ENCODE measurements at regions of chr14 and their contacts with region 1.

Region 1: GRCh38 chr14:33839193-33840076 is 111.4 kb downstream of the EGLN3 start:
- DNase-seq: peak; percentile 51
- H3K4me3 Mint-ChIP-seq: no peak overlapping the region
- H3K27ac Mint-ChIP-seq: no peak overlapping the region
- H3K4me1 Mint-ChIP-seq: peaks cover 1% of the 10 kb centered on the region
- H3K27me3 Mint-ChIP-seq: no peaks in the 10 kb centered on the region

Region 2: DNA sequence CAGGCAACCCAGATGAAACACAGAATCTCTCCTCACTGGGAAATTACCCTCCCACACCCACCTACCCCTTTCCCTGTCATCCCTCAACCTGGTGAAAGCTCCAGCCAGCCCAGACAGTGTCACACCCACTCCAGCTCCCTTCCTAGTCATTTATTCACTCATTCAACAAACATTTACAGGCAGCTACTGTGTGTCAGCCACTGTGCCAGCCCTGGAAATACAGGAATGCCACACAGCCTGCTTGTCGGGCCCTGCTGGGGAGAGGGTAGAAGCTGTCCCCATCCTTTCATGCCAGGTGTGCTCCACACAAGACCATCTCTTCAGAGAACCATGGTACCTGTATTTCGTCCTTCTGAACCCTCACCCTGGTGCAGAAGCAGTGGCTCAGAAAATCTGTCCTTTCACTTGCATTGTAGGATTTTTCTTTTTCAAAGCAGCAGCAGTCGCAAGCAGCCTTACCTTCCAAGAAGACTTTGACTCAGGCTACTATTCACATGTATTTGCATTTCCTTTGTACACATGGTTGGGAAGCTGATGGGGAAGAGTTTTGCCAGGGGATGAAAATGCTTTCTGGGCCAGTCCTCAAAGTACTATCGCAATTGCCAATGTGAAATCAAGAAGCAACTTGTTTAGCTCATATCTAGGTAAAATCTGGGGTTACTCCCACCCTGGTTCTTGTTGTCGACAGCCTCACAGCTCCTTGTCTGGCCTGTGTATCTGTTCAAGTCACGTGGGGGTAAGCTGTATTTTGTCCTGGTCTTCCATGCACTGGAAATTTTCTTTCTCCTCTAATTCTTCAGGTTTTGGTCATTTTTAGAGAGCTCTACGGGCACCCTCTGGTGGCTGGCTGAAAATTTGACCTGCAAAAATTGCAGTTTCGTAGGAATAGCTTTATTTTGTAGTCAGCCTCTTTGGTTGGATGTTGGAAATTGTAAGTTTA is 258.9 kb after region 1 on chr14:
- CTCF ChIA-PET with region 1: interaction called, 44 read pairs
- POLR2A ChIA-PET with region 1: no interaction called
- intact Hi-C with region 1: loop called (anchors 2 kb)
- DNase-seq: peak; percentile 26
- H3K4me3 Mint-ChIP-seq: no peak overlapping the region
- H3K27ac Mint-ChIP-seq: no peak overlapping the region
- H3K4me1 Mint-ChIP-seq: peaks cover 1% of the 10 kb centered on the region
- H3K27me3 Mint-ChIP-seq: no peaks in the 10 kb centered on the region

Region 3: GRCh38 chr14:34227834-34228649 is 388.6 kb after region 1 on chr14:
- CTCF ChIA-PET with region 1: interaction called, 27 read pairs
- POLR2A ChIA-PET with region 1: no interaction called
- intact Hi-C with region 1: loop called (anchors 1 kb)
- DNase-seq: peak; percentile 70
- H3K4me3 Mint-ChIP-seq: no peak overlapping the region
- H3K27ac Mint-ChIP-seq: no peak overlapping the region
- H3K4me1 Mint-ChIP-seq: peaks cover 6% of the 10 kb centered on the region
- H3K27me3 Mint-ChIP-seq: peaks cover 6% of the 10 kb centered on the region

Region 4: GRCh38 chr14:34300882-34301734 is 461.7 kb after region 1 on chr14:
- CTCF ChIA-PET with region 1: interaction called, 24 read pairs
- POLR2A ChIA-PET with region 1: no interaction called
- intact Hi-C with region 1: loop called (anchors 2 kb)
- DNase-seq: no peak
- H3K4me3 Mint-ChIP-seq: no peak overlapping the region
- H3K27ac Mint-ChIP-seq: no peak overlapping the region
- H3K4me1 Mint-ChIP-seq: no peaks in the 10 kb centered on the region
- H3K27me3 Mint-ChIP-seq: peaks cover 7% of the 10 kb centered on the region

Region 5: DNA sequence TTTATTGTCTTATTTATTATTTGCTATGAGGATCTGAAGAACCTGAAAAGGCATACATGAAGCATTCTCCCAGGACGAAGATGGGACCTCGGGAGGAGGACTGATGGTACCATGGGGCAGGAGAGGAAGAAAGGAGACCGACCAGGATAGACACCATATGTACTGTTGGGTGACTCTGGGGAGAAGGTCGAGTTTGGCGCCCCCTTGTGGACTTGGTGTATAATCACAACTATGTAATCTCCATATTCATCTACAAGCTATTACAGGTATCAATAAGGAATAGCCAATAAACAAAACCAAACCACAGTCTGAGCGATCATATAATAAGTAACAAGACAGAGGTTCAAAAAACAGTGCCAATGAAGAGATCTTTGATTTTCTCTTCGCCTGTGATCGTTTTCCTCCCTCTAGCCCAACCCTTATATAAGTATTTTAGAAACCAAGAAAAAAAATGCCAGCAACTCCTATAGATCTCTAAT is 483.5 kb after region 1 on chr14:
- CTCF ChIA-PET with region 1: interaction called, 30 read pairs
- POLR2A ChIA-PET with region 1: no interaction called
- intact Hi-C with region 1: loop called (anchors 2 kb)
- DNase-seq: peak; percentile 80
- H3K4me3 Mint-ChIP-seq: no peak overlapping the region
- H3K27ac Mint-ChIP-seq: no peak overlapping the region
- H3K4me1 Mint-ChIP-seq: no peaks in the 10 kb centered on the region
- H3K27me3 Mint-ChIP-seq: peaks cover 1% of the 10 kb centered on the region